GM12878 (cell line): ENCODE measurements at regions of chr18 and their contacts with region 1.

Region 1: DNA sequence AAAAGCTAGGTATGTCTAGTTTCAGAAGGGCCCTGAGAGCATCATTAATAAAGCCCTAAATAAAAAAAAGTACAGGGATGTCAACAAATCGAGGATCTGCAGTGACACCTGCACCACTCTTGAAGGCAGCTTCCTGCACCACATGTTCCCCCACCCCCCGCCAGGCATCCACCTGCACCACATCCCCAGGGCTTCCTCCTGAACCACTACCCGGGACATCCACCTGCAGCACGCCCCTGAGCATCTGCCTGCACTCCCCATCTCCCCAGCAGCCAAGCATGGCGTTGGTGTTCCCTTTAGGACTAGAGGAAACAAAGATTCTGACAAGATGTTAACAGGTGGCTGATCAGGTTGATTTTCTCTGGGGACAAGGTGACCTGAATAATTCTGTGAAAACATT is 55.2 kb downstream of the DLGAP1 start:
- DNase-seq: no peak
- ATAC-seq: peak; percentile 6
- H3K4me3 ChIP-seq: no peak overlapping the region
- H3K27ac ChIP-seq: no peak overlapping the region
- H3K4me1 ChIP-seq: no peaks in the 10 kb centered on the region
- H3K27me3 ChIP-seq: no peaks in the 10 kb centered on the region
- CTCF ChIP-seq: no peak
- EP300 ChIP-seq: no peak
- POLR2A ChIP-seq: no peak
- RAD21 ChIP-seq: no peak

Region 2: GRCh38 chr18:4181882-4182568 is 217.9 kb before region 1 on chr18:
- CTCF ChIA-PET with region 1: no interaction called
- POLR2A ChIA-PET with region 1: no interaction called
- RAD21 ChIA-PET with region 1: interaction called, 3 read pairs
- SMC1A ChIA-PET with region 1: interaction called, 11 read pairs
- in situ Hi-C with region 1: no loop called
- intact Hi-C with region 1: no loop called
- DNase-seq: no peak
- ATAC-seq: peak; percentile 84
- H3K4me3 ChIP-seq: no peak overlapping the region
- H3K27ac ChIP-seq: no peak overlapping the region
- H3K4me1 ChIP-seq: no peaks in the 10 kb centered on the region
- H3K27me3 ChIP-seq: no peaks in the 10 kb centered on the region
- CTCF ChIP-seq: peak in 1 of 3 experiments; percentile 35; a peak in 2 of 6 replicates
- EP300 ChIP-seq: no peak
- POLR2A ChIP-seq: no peak
- RAD21 ChIP-seq: peak; percentile 38

Region 3: GRCh38 chr18:4384932-4385331 is 15.0 kb before region 1 on chr18:
- CTCF ChIA-PET with region 1: interaction called, 4 read pairs
- POLR2A ChIA-PET with region 1: interaction called, 11 read pairs
- RAD21 ChIA-PET with region 1: interaction called, 13 read pairs
- SMC1A ChIA-PET with region 1: interaction called, 10 read pairs
- in situ Hi-C with region 1: no loop called
- intact Hi-C with region 1: no loop called
- DNase-seq: no peak
- ATAC-seq: peak; percentile 88
- H3K4me3 ChIP-seq: no peak overlapping the region
- H3K27ac ChIP-seq: no peak overlapping the region
- H3K4me1 ChIP-seq: no peaks in the 10 kb centered on the region
- H3K27me3 ChIP-seq: no peaks in the 10 kb centered on the region
- CTCF ChIP-seq: no peak
- EP300 ChIP-seq: peak; percentile 40; a peak in 2 of 4 replicates
- POLR2A ChIP-seq: no peak
- RAD21 ChIP-seq: no peak

Region 4: DNA sequence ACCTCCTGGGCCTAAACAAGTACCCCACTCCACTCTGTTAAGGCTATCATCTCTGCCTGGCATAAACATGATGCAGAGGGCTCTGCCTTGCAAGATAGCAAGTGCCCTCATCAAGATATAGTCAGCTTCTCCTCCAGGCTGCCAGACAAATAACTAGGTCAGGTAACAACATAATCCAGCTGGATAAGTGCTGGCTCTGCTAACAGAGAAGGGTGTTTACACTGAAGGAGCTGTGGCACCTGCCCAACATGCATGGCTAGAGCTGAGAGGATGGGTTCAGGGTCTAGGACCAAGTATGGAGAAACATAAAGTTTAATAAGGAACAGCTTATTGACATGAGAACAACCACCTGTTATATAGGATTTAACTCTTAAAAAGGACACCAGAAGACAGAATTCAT is 12.4 kb after region 1 on chr18:
- CTCF ChIA-PET with region 1: interaction called, 3 read pairs
- POLR2A ChIA-PET with region 1: interaction called, 6 read pairs
- RAD21 ChIA-PET with region 1: interaction called, 8 read pairs
- SMC1A ChIA-PET with region 1: interaction called, 17 read pairs
- in situ Hi-C with region 1: no loop called
- intact Hi-C with region 1: no loop called
- DNase-seq: no peak
- ATAC-seq: peak; percentile 21
- H3K4me3 ChIP-seq: no peak overlapping the region
- H3K27ac ChIP-seq: no peak overlapping the region
- H3K4me1 ChIP-seq: no peaks in the 10 kb centered on the region
- H3K27me3 ChIP-seq: no peaks in the 10 kb centered on the region
- CTCF ChIP-seq: no peak
- EP300 ChIP-seq: no peak
- POLR2A ChIP-seq: no peak
- RAD21 ChIP-seq: no peak

Region 5: DNA sequence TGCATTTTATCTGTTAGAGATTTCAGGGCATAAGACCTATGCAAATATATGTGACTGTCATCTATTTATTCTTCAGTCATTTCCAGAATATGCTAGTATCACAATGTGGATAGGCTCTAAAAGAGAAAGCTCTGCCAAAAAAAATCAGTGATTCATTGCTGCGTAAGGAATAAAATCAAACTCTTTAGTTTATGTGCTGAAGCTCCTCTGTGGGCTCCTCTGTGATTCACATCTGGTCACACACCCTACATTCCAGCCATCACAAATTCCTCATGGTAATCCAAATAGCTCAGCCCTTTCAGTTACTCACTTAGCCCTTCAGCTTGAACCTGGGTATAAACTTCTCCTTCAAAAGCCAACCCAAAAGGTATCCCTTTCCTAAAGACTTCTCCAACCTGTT is 33.8 kb after region 1 on chr18:
- CTCF ChIA-PET with region 1: interaction called, 9 read pairs
- POLR2A ChIA-PET with region 1: interaction called, 4 read pairs
- RAD21 ChIA-PET with region 1: interaction called, 5 read pairs
- SMC1A ChIA-PET with region 1: interaction called, 13 read pairs
- in situ Hi-C with region 1: no loop called
- intact Hi-C with region 1: no loop called
- DNase-seq: no peak
- ATAC-seq: no peak
- H3K4me3 ChIP-seq: no peak overlapping the region
- H3K27ac ChIP-seq: no peak overlapping the region
- H3K4me1 ChIP-seq: no peaks in the 10 kb centered on the region
- H3K27me3 ChIP-seq: no peaks in the 10 kb centered on the region
- CTCF ChIP-seq: no peak
- EP300 ChIP-seq: no peak
- POLR2A ChIP-seq: no peak
- RAD21 ChIP-seq: no peak

Region 6: DNA sequence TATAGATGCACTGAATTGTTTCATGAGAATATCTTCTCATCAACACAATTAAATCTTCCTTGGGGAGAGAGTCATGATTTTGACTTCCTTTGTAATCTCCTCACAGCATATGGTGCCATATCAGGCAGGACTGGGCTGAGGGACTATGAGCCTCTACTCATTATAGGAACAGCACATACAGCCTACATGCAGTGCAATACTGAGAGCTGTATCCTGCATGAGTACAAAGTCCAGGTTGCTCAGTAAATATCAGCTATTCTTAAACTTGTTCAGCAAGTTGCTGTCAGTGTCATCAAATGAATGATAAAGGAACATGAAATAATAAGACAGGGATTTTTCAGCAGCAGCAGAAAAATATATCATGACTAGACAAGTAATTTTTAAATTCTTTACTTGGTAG is 44.4 kb after region 1 on chr18:
- CTCF ChIA-PET with region 1: no interaction called
- POLR2A ChIA-PET with region 1: interaction called, 4 read pairs
- RAD21 ChIA-PET with region 1: interaction called, 9 read pairs
- SMC1A ChIA-PET with region 1: interaction called, 14 read pairs
- in situ Hi-C with region 1: no loop called
- intact Hi-C with region 1: loop called (anchors 5 kb)
- DNase-seq: no peak
- ATAC-seq: peak; percentile 50
- H3K4me3 ChIP-seq: no peak overlapping the region
- H3K27ac ChIP-seq: no peak overlapping the region
- H3K4me1 ChIP-seq: no peaks in the 10 kb centered on the region
- H3K27me3 ChIP-seq: no peaks in the 10 kb centered on the region
- CTCF ChIP-seq: no peak
- EP300 ChIP-seq: no peak
- POLR2A ChIP-seq: no peak
- RAD21 ChIP-seq: no peak

Region 7: GRCh38 chr18:4468511-4468910 is 68.6 kb after region 1 on chr18:
- CTCF ChIA-PET with region 1: no interaction called
- POLR2A ChIA-PET with region 1: no interaction called
- RAD21 ChIA-PET with region 1: no interaction called
- SMC1A ChIA-PET with region 1: no interaction called
- in situ Hi-C with region 1: no loop called
- intact Hi-C with region 1: no loop called
- DNase-seq: no peak
- ATAC-seq: peak; percentile 42
- H3K4me3 ChIP-seq: no peak overlapping the region
- H3K27ac ChIP-seq: no peak overlapping the region
- H3K4me1 ChIP-seq: no peaks in the 10 kb centered on the region
- H3K27me3 ChIP-seq: no peaks in the 10 kb centered on the region
- CTCF ChIP-seq: no peak
- EP300 ChIP-seq: no peak
- POLR2A ChIP-seq: no peak
- RAD21 ChIP-seq: no peak

Region 8: GRCh38 chr18:4524096-4524495 is 124.2 kb after region 1 on chr18:
- CTCF ChIA-PET with region 1: no interaction called
- POLR2A ChIA-PET with region 1: no interaction called
- RAD21 ChIA-PET with region 1: no interaction called
- SMC1A ChIA-PET with region 1: no interaction called
- in situ Hi-C with region 1: no loop called
- intact Hi-C with region 1: no loop called
- DNase-seq: no peak
- ATAC-seq: no peak
- H3K4me3 ChIP-seq: no peak overlapping the region
- H3K27ac ChIP-seq: no peak overlapping the region
- H3K4me1 ChIP-seq: no peaks in the 10 kb centered on the region
- H3K27me3 ChIP-seq: no peaks in the 10 kb centered on the region
- CTCF ChIP-seq: 0 out of 6 replicates have a peak, but pooled peaks of 1 of the 3 experiments have one; percentile 3
- EP300 ChIP-seq: no peak
- POLR2A ChIP-seq: no peak
- RAD21 ChIP-seq: no peak